Tibial artery (tissue), 4 donors: ENCODE measurements at regions of chr9 and their contacts with region 1.

Region 1: DNA sequence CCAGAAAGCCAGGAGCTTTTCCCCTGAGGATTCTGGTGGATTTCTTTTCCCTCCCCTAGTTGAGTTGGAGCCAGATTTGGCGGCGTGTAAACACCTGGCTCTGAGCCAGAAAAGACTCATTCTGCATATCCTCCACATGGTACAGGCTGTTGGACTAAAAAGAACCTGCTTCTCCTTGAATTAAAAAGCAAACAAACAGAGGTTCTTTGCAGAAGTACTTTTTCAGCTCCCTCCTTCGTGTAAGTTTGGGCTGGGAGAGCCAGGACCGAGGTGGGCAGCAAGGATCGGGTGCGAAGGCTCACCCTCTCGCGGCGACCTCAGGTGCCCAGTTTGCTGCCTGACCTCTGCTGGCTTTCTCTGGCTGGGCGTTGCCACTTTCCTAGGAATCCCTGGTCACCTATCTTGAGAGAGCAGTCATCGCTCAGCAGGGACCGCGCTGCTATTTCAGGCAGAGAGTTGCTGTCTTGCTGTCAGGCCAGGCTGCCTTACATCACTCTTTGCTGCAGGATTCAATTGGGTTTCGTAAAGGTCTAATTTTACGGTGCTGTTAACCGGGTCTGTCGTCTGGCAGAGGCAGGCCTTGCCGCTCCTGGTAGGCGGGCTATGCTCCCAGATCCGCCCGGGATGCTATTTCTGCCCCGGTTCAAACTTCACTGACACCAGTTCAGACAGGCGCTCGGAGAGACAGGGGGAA is 3.2 kb downstream of the PAPPA start:
- DNase-seq: peak; percentile 73 to 88
- H3K4me3 ChIP-seq: peak overlapping the region; percentile 48 to 59
- H3K27ac ChIP-seq: peak overlapping the region; percentile 81 to 84
- H3K4me1 ChIP-seq: peaks cover 0 to 51% (median 20%) of the 10 kb centered on the region in 4 donors
- H3K27me3 ChIP-seq: no peaks in the 10 kb centered on the region
- CTCF ChIP-seq: no peak

Region 2: GRCh38 chr9:114906908-114907571 is 1249.7 kb before region 1 on chr9:
- intact Hi-C with region 1: no loop called
- DNase-seq: no peak
- H3K4me3 ChIP-seq: no peak overlapping the region
- H3K27ac ChIP-seq: no peak overlapping the region
- H3K4me1 ChIP-seq: no peaks in the 10 kb centered on the region
- H3K27me3 ChIP-seq: no peaks in the 10 kb centered on the region
- CTCF ChIP-seq: peak; percentile 33 to 36

Region 3: DNA sequence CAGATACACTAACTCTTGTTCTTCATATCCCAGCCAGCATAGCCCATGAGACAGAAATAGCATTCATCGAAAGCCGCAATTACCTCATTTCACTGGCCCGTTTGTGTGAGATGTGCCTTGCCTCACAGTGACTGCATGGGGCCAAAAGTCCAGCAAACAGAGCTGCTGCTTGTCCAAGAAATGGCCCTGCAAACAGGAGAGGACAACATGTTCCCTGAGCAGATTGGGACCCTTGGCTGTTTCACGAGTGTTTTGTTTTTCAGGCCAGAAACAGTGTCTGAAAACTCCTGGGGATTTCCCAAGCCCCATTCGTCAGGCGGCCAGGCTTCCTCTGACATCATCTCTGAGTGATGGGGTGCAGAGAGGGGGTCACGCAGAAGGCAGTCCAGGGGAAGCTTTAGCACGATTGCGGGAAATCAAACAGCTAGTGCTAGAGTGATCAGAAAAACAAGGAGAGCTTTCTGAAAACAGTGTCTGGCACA is 506.7 kb before region 1 on chr9:
- intact Hi-C with region 1: loop called (anchors 5 kb)
- DNase-seq: peak; percentile 89 to 95
- H3K4me3 ChIP-seq: no peak overlapping the region
- H3K27ac ChIP-seq: peak overlapping the region; percentile 68 to 81
- H3K4me1 ChIP-seq: peaks cover 0 to 33% (median 8%) of the 10 kb centered on the region in 4 donors
- H3K27me3 ChIP-seq: no peaks in the 10 kb centered on the region
- CTCF ChIP-seq: no peak

Region 4: DNA sequence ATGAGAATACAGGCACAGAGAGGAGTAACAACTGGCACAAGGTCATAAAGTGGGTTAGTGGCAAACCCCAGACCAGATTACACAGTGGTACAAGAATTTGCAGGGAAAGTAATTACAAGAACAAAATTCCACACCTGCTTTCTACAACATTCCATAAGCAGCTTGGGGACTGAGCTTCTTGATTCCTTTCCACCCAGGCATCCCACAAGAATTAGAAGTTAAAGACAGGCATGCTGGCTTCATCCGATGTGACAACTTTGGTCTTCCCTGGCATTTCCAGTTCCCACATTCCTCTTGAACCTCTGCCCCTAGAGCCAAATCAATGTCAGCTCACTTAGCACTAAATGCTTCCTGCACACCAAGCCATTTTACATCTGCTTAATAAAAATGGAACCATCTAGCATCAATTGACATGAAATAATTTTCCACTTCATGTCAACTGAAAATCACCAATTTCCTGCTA is 439.0 kb before region 1 on chr9:
- intact Hi-C with region 1: no loop called
- DNase-seq: no peak
- H3K4me3 ChIP-seq: no peak overlapping the region
- H3K27ac ChIP-seq: no peak overlapping the region
- H3K4me1 ChIP-seq: peaks cover 0 to 12% (median 0%) of the 10 kb centered on the region in 4 donors
- H3K27me3 ChIP-seq: no peaks in the 10 kb centered on the region
- CTCF ChIP-seq: no peak

Region 5: GRCh38 chr9:116101516-116101915 is 55.3 kb before region 1 on chr9:
- intact Hi-C with region 1: no loop called
- DNase-seq: no peak
- H3K4me3 ChIP-seq: no peak overlapping the region
- H3K27ac ChIP-seq: no peak overlapping the region
- H3K4me1 ChIP-seq: no peaks in the 10 kb centered on the region
- H3K27me3 ChIP-seq: no peaks in the 10 kb centered on the region
- CTCF ChIP-seq: no peak